GM12878 (cell line): ENCODE measurements at regions of chr1 and their contacts with region 1.

Region 1: DNA sequence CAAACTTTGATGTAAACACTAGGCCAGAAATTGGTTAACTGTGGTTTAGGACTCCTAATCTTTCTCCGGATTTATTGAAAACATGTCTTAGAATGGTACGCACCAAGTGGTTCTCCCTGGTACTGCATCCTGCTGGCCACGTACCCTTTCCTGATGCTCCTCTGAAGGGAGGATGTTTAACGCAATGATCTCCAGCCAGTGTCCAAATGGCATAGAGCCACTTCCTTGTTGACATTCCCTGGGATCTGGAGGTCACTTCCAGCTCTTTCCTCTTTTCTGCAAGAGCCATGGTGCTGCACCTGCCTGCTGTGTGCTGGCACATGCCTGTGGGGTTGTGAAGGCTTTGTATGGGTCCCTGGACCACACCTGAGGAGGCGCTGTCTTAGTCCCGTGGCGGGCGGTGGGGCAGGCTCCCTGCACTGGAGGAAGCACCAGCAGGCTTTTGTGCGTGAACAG is 53.9 kb downstream of the GALNT2 start:
- DNase-seq: no peak
- ATAC-seq: no peak
- H3K4me3 ChIP-seq: no peak overlapping the region
- H3K27ac ChIP-seq: 0 out of 2 replicates have a peak overlapping the region, but pooled peaks have one; percentile 2
- H3K4me1 ChIP-seq: peaks cover 50% of the 10 kb centered on the region
- H3K27me3 ChIP-seq: no peaks in the 10 kb centered on the region
- CTCF ChIP-seq: peak; percentile 39 to 74 (median 73); a peak in 5 of 6 replicates
- EP300 ChIP-seq: no peak
- POLR2A ChIP-seq: no peak
- RAD21 ChIP-seq: peak; percentile 50

Region 2: GRCh38 chr1:230022666-230023380 is 98.1 kb before region 1 on chr1:
- CTCF ChIA-PET with region 1: no interaction called
- POLR2A ChIA-PET with region 1: no interaction called
- RAD21 ChIA-PET with region 1: no interaction called
- SMC1A ChIA-PET with region 1: no interaction called
- in situ Hi-C with region 1: no loop called
- intact Hi-C with region 1: no loop called
- DNase-seq: no peak
- ATAC-seq: no peak
- H3K4me3 ChIP-seq: no peak overlapping the region
- H3K27ac ChIP-seq: no peak overlapping the region
- H3K4me1 ChIP-seq: no peaks in the 10 kb centered on the region
- H3K27me3 ChIP-seq: peaks cover 0 to 1% of the 10 kb centered on the region in 2 experiments; a peak in 1 of 4 replicates
- CTCF ChIP-seq: no peak
- EP300 ChIP-seq: no peak
- POLR2A ChIP-seq: no peak
- RAD21 ChIP-seq: no peak

Region 3: DNA sequence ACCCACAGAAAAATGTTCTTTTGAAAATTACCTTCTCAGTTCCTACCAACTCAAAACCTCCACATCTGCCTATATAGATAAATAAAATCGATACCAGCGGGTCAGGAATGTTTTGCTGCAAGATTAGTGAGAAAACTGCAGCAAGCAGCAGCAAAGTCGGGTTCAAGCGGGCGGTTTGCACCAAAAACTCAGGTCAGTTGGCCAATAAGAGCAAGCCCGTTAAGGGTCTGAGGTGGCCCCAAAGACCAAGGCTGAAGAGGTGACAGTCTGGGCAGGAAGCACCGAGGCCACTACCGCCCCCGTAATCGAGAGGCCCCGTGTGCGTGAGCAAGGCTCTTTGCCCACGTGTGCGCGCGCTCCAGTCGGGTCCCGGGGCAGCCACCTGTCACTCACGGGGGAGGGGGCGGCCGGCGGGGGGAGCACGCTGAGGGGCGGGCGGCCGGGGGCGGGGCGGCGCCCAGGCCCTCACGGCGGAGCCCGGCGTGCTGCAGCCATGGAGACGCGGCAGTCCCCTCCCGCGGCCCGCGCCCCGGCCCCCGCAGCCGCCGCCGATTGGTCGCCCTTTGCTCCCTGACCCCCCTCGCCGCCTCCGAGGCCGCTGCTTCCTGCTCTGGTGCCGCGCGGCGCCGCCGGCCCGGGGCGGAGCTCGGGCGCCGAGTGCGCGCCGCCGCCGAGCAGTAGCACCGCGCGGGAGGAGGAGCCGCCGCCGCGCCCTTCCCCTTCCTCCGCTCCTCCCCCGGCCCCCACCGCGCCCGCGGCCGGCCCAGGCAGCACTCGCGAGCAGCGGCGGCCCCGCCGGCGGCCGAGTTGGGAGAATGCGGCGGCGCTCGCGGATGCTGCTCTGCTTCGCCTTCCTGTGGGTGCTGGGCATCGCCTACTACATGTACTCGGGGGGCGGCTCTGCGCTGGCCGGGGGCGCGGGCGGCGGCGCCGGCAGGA is 54.2 kb before region 1 on chr1 and contains the start of gene GALNT2:
- CTCF ChIA-PET with region 1: interaction called, 5 read pairs
- POLR2A ChIA-PET with region 1: interaction called, 6 read pairs
- RAD21 ChIA-PET with region 1: interaction called, 11 read pairs
- SMC1A ChIA-PET with region 1: interaction called, 6 read pairs
- in situ Hi-C with region 1: no loop called
- intact Hi-C with region 1: loop called (anchors 1 kb)
- DNase-seq: peak; percentile 48
- ATAC-seq: peak; percentile 83
- H3K4me3 ChIP-seq: peak within 1 kb of the TSS; percentile 96
- H3K27ac ChIP-seq: peak within 1 kb of the TSS; percentile 77
- H3K4me1 ChIP-seq: no peaks in the 10 kb centered on the region; the same call in 1 of the 2 replicates
- H3K27me3 ChIP-seq: no peaks in the 10 kb centered on the region
- CTCF ChIP-seq: no peak
- EP300 ChIP-seq: peak; percentile 36 to 56; a peak in 1 of 4 replicates
- POLR2A ChIP-seq: peak; percentile 78
- RAD21 ChIP-seq: peak; percentile 20; the same call in 1 of the 2 replicates
- polyA plus RNA-seq, gene GALNT2: 0.52 to 1.2 TPM

Region 4: DNA sequence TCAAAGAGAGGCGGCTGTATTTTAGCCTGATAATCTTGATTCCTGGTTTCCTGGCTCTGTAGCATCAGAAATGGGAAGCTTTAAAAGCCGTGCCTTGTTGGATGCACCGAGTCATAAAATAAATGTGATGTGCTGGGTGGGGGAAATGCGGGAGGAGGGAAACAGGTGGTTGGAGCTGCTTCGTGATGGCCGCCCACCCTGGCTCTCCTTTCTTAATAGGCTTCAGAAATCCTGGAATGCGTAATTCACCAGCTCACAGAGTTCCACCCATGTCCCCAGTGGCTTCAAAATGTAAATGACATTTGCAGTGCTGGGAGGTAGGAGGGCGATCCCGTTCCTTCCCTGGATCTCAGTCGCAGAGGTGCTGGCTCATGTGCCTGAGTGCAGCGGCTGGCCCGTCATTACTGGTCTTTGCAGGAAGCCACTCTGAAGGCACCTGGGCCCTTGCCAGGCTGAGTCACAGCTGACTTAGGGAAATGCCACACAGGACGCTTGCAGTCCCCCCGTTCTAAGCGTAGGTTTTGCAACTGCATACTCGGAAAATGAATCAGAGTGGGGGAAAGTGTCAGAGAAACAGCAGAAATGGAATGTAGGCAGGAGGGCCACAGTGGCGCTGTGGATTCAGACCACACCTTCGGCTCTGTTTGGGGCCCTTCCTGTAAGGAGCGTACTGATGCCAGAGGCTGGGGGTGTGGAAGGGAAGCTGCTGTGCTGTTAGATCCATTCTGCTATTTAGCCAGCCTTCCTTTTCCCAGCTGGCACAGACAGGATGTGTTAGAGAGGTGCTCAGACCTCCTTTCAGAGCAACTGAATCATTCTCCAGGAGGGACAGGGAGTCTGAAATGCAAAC is 16.3 kb before region 1 on chr1:
- CTCF ChIA-PET with region 1: interaction called, 29 read pairs
- POLR2A ChIA-PET with region 1: interaction called, 48 read pairs
- RAD21 ChIA-PET with region 1: interaction called, 99 read pairs
- SMC1A ChIA-PET with region 1: interaction called, 104 read pairs
- in situ Hi-C with region 1: no loop called
- intact Hi-C with region 1: no loop called
- DNase-seq: peak; percentile 69
- ATAC-seq: peak; percentile 84
- H3K4me3 ChIP-seq: 0 out of 2 replicates have a peak overlapping the region, but pooled peaks have one; percentile 3
- H3K27ac ChIP-seq: peak overlapping the region; percentile 63
- H3K4me1 ChIP-seq: peaks cover 53% of the 10 kb centered on the region
- H3K27me3 ChIP-seq: no peaks in the 10 kb centered on the region
- CTCF ChIP-seq: no peak
- EP300 ChIP-seq: peak in 1 of 2 experiments; percentile 16; a peak in 1 of 4 replicates
- POLR2A ChIP-seq: 0 out of 2 replicates have a peak, but pooled peaks have one; percentile 15
- RAD21 ChIP-seq: no peak

Region 5: GRCh38 chr1:230109895-230110667 is 10.9 kb before region 1 on chr1:
- CTCF ChIA-PET with region 1: interaction called, 29 read pairs
- POLR2A ChIA-PET with region 1: interaction called, 48 read pairs
- RAD21 ChIA-PET with region 1: interaction called, 99 read pairs
- SMC1A ChIA-PET with region 1: interaction called, 104 read pairs
- in situ Hi-C with region 1: no loop called
- intact Hi-C with region 1: loop called (anchors 1 kb)
- DNase-seq: peak; percentile 88
- ATAC-seq: peak; percentile 90
- H3K4me3 ChIP-seq: no peak overlapping the region
- H3K27ac ChIP-seq: peak overlapping the region; percentile 64
- H3K4me1 ChIP-seq: peaks cover 57% of the 10 kb centered on the region
- H3K27me3 ChIP-seq: no peaks in the 10 kb centered on the region
- CTCF ChIP-seq: peak; percentile 27 to 49 (median 29); a peak in 4 of 6 replicates
- EP300 ChIP-seq: peak; percentile 56 to 81; a peak in 3 of 4 replicates
- POLR2A ChIP-seq: peak; percentile 64
- RAD21 ChIP-seq: peak; percentile 53

Region 6: GRCh38 chr1:230132758-230133157 is 11.8 kb after region 1 on chr1:
- CTCF ChIA-PET with region 1: interaction called, 25 read pairs
- POLR2A ChIA-PET with region 1: interaction called, 23 read pairs
- RAD21 ChIA-PET with region 1: interaction called, 23 read pairs
- SMC1A ChIA-PET with region 1: interaction called, 18 read pairs
- in situ Hi-C with region 1: no loop called
- intact Hi-C with region 1: no loop called
- DNase-seq: no peak
- ATAC-seq: peak; percentile 40
- H3K4me3 ChIP-seq: no peak overlapping the region
- H3K27ac ChIP-seq: no peak overlapping the region; the same call in 1 of the 2 replicates
- H3K4me1 ChIP-seq: no peaks in the 10 kb centered on the region
- H3K27me3 ChIP-seq: no peaks in the 10 kb centered on the region
- CTCF ChIP-seq: no peak
- EP300 ChIP-seq: no peak
- POLR2A ChIP-seq: no peak
- RAD21 ChIP-seq: no peak

Region 7: DNA sequence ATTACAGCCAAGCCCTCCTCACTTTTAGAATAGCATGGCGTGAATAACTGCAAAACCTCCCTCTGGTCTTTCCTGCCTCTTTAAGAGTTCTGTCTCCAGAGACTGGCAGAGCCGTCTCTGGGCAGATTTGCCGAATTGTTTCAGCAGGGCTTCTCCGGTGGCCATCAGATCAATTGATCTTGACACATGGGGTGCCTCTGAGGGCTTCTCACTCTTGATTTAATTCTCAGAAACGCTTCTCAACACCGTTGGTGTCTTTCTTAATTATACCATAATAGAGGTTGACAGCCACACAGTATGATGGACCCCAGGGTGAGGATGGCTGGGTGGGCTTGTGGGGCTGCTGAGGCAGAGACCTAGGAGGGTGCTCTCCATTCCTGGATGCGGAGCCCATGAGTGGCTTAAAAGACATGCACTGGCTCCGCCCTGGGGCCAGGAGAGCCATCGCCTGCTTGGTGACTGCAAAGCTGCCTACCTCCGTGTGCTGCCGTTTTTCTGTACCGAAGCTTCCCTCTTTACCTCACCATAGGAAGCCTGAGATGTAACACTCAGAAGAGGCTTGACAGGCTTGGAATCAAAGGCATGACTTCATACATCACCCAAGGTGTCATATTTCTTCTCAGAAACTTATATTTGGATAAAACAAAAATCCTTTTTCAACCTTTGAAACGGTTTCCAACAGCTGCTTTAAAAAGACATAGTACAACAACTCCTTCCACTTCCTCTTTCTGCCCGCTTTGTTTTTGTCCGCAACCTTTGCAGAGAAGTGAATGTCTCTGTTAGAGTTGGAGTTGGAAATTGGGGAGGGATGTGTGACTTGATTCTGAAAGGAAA is 29.0 kb after region 1 on chr1:
- CTCF ChIA-PET with region 1: interaction called, 5 read pairs
- POLR2A ChIA-PET with region 1: interaction called, 10 read pairs
- RAD21 ChIA-PET with region 1: interaction called, 20 read pairs
- SMC1A ChIA-PET with region 1: interaction called, 25 read pairs
- in situ Hi-C with region 1: no loop called
- intact Hi-C with region 1: no loop called
- DNase-seq: peak; percentile 60
- ATAC-seq: peak; percentile 86
- H3K4me3 ChIP-seq: peak overlapping the region; percentile 53
- H3K27ac ChIP-seq: peak overlapping the region; percentile 68
- H3K4me1 ChIP-seq: peaks cover 40% of the 10 kb centered on the region
- H3K27me3 ChIP-seq: no peaks in the 10 kb centered on the region
- CTCF ChIP-seq: peak in 2 of 3 experiments; percentile 17 to 35; a peak in 3 of 6 replicates
- EP300 ChIP-seq: peak; percentile 57 to 70; a peak in 2 of 4 replicates
- POLR2A ChIP-seq: no peak
- RAD21 ChIP-seq: 0 out of 2 replicates have a peak, but pooled peaks have one; percentile 27

Region 8: DNA sequence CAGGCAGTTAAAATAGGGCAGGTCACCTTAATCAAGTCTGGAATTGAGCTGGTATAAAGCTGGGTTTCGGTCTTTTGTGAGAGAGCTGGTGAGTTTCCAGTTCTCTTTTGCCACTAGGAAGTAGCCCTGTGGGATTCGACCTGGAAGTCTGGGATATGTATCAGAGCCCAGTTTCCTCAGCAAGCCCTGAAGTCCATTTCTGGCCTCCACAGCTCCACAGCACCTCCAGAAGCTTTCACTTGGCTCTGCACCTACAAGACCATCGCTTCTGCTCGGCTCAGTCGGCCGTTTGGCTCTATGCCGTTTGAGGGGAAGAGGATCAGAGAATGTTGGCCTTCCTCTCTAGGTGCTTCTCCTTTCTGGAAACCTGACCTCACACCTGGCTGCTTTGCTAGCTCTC is 94.1 kb after region 1 on chr1:
- CTCF ChIA-PET with region 1: interaction called, 14 read pairs
- POLR2A ChIA-PET with region 1: no interaction called
- RAD21 ChIA-PET with region 1: interaction called, 19 read pairs
- SMC1A ChIA-PET with region 1: interaction called, 23 read pairs
- in situ Hi-C with region 1: loop called (anchors 5 kb)
- intact Hi-C with region 1: loop called (anchors 1 kb)
- DNase-seq: no peak
- ATAC-seq: no peak
- H3K4me3 ChIP-seq: no peak overlapping the region
- H3K27ac ChIP-seq: no peak overlapping the region
- H3K4me1 ChIP-seq: peaks cover 32% of the 10 kb centered on the region
- H3K27me3 ChIP-seq: no peaks in the 10 kb centered on the region
- CTCF ChIP-seq: peak in 2 of 3 experiments; percentile 3 to 22; a peak in 1 of 6 replicates
- EP300 ChIP-seq: no peak
- POLR2A ChIP-seq: no peak
- RAD21 ChIP-seq: peak; percentile 32; the same call in 1 of the 2 replicates

Region 9: DNA sequence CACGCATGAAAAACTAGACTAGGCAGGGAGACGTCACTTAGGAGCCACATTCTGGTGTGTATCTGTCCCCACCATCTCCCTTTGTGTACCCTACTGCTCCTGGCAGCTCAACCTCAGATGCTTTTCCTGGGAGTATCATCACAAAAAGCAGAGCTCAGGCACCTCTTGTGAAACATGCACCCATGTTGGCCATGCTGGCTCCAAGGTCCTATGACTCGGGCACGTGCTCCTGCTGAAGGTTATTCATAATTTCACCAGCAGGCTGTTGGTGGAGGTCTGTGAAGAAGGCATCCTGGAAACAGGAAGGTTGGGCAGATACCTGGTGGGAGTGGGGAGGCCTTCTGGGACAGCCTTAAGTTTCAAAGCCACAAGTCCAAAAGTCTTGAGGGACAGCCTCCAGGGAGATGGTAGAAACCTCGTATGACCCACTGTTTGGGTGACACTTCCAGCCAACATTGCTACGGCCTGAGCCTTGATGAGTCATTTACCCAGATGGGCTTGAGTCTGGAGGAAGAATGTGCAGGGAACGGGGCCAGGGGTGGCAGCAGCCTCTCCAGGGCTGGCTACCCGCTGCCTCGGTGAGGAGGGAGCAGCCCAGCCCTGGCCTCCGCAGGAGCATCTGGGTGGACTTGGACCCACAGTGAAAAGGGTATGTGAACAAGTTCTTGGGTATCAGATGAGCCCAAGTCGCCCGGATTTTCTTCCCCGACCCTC is 229.4 kb after region 1 on chr1:
- CTCF ChIA-PET with region 1: no interaction called
- POLR2A ChIA-PET with region 1: no interaction called
- RAD21 ChIA-PET with region 1: no interaction called
- SMC1A ChIA-PET with region 1: no interaction called
- in situ Hi-C with region 1: no loop called
- intact Hi-C with region 1: no loop called
- DNase-seq: no peak
- ATAC-seq: no peak
- H3K4me3 ChIP-seq: no peak overlapping the region
- H3K27ac ChIP-seq: no peak overlapping the region
- H3K4me1 ChIP-seq: no peaks in the 10 kb centered on the region
- H3K27me3 ChIP-seq: peaks cover 0 to 6% of the 10 kb centered on the region in 2 experiments; a peak in 3 of 4 replicates
- CTCF ChIP-seq: no peak
- EP300 ChIP-seq: no peak
- POLR2A ChIP-seq: no peak
- RAD21 ChIP-seq: no peak